B cell (primary cell): ENCODE measurements at regions of chr16 and their contacts with region 1.

Region 1: DNA sequence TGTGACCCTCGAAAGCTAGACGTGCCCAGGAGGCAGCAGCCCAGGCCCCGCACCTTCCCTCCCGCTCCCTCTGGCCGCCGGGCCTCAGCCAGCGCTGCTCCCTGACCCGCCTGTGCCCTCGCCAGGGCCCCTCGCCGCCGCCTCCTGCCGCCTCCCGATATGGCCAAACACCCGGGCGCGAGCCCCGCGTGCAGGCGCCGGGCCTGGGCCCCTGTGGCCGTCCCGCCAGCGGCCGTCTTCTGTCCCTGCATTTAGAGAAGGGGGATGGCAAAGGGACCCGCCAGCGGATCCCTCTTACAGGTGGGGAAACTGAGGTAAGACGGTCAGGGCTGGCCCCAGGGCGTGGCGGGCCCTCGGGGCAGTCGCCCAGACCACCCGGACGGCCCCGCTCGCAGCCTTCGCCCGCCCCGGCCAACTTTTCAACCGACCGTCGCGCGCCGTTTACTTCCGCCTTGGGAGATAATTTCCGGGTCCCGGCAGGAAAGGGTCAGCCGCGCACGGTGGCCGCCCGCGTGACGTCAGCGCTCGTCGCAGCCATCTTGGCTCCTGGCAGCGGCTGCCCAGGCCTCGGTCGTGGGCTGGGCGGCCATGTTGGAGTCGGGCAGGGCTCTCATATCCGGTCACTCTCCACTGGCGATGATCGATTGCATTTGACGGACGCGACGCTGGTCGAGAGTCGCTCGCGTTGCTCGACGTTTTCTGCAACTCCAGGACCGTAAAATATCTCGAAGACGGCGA is 7.0 kb upstream of the GNG13 start:
- DNase-seq: peak; percentile 89
- ATAC-seq: peak; percentile 97
- H3K4me3 ChIP-seq: peak overlapping the region; percentile 68 to 82 (median 78)
- H3K4me3 Mint-ChIP-seq: peak overlapping the region; percentile 99
- H3K27ac ChIP-seq: peak overlapping the region; percentile 73 to 92
- H3K27ac Mint-ChIP-seq: peak overlapping the region; percentile 96
- H3K4me1 ChIP-seq: peaks cover 5 to 18% of the 10 kb centered on the region in 2 donors
- H3K4me1 Mint-ChIP-seq: peaks cover 8% of the 10 kb centered on the region
- H3K27me3 ChIP-seq: peaks cover 0 to 13% (median 0%) of the 10 kb centered on the region in 4 experiments
- H3K27me3 Mint-ChIP-seq: peaks cover 12% of the 10 kb centered on the region
- CTCF ChIP-seq: no peak

Region 2: DNA sequence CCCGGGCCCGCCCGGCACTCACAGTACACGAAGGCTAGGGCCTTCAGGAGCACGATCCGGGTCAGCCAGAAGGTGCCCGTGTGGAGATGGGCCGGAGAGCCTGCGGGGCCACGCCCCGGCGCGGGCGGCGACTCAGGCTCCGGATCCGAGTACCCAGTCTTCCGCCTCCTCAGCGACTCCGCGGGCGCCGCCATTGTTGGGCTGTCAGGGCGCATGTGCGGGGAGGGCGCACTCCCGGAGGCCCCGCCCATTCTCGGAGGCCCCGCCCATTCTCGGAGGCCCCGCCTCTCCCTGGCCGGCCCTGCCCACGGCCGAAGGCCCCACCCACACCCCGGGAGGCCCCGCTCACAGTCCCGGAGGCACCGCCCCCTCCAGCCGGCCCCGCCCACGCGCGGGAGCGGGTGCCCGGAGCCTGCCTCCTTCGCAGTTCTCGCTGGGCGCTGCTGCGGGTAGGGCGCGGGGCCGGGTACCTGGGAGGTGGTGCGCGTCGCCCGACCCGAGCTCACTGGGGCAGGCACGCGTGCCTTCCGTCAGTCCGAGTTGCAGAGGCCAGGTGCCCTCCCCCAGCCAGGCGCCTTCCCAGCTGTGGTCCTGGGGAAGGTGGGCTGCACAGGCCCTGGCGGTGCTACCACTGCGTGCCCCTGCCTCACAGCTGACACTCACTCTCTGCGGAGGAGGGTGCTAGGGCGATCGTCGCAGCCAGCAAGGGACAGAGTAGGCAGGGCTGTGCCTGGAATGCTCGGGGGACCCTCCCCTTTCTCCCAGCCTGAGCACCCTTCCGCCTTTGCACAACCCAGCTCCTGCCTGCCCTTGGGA is 163.5 kb after region 1 on chr16 and contains the start of gene LMF1:
- CTCF ChIA-PET with region 1: no interaction called
- POLR2A ChIA-PET with region 1: no interaction called
- intact Hi-C with region 1: loop called (anchors 2 kb)
- DNase-seq: peak; percentile 96
- ATAC-seq: peak; percentile 99
- H3K4me3 ChIP-seq: peak within 1 kb of the TSS in 4 of 5 experiments; percentile 68 to 90 (median 84)
- H3K4me3 Mint-ChIP-seq: peak within 1 kb of the TSS; percentile 83
- H3K27ac ChIP-seq: peak within 1 kb of the TSS; percentile 38 to 77
- H3K27ac Mint-ChIP-seq: peak within 1 kb of the TSS; percentile 53
- H3K4me1 ChIP-seq: peaks cover 9 to 17% of the 10 kb centered on the region in 2 donors
- H3K4me1 Mint-ChIP-seq: peaks cover 19% of the 10 kb centered on the region
- H3K27me3 ChIP-seq: peaks cover 0 to 4% (median 0%) of the 10 kb centered on the region in 4 experiments
- H3K27me3 Mint-ChIP-seq: no peaks in the 10 kb centered on the region
- CTCF ChIP-seq: no peak
- total RNA-seq, gene LMF1: 60.3 and 63.2 TPM in 2 replicates